B cell (primary cell): ENCODE measurements at regions of chr3 and their contacts with region 1.

Region 1: GRCh38 chr3:9749645-9750555 is at the start of gene OGG1:
- DNase-seq: peak; percentile 98
- ATAC-seq: peak; percentile 90
- H3K4me3 ChIP-seq: peak within 1 kb of the TSS; percentile 53 to 87 (median 80)
- H3K4me3 Mint-ChIP-seq: peak within 1 kb of the TSS; percentile 92
- H3K27ac ChIP-seq: peak within 1 kb of the TSS; percentile 58 to 64
- H3K27ac Mint-ChIP-seq: peak within 1 kb of the TSS; percentile 94
- H3K4me1 ChIP-seq: peaks cover 31 to 36% of the 10 kb centered on the region in 2 donors
- H3K4me1 Mint-ChIP-seq: peaks cover 49% of the 10 kb centered on the region
- H3K27me3 ChIP-seq: no peaks in the 10 kb centered on the region
- H3K27me3 Mint-ChIP-seq: no peaks in the 10 kb centered on the region
- CTCF ChIP-seq: no peak
- total RNA-seq, gene OGG1: 81.6 and 90.8 TPM in 2 replicates

Region 2: DNA sequence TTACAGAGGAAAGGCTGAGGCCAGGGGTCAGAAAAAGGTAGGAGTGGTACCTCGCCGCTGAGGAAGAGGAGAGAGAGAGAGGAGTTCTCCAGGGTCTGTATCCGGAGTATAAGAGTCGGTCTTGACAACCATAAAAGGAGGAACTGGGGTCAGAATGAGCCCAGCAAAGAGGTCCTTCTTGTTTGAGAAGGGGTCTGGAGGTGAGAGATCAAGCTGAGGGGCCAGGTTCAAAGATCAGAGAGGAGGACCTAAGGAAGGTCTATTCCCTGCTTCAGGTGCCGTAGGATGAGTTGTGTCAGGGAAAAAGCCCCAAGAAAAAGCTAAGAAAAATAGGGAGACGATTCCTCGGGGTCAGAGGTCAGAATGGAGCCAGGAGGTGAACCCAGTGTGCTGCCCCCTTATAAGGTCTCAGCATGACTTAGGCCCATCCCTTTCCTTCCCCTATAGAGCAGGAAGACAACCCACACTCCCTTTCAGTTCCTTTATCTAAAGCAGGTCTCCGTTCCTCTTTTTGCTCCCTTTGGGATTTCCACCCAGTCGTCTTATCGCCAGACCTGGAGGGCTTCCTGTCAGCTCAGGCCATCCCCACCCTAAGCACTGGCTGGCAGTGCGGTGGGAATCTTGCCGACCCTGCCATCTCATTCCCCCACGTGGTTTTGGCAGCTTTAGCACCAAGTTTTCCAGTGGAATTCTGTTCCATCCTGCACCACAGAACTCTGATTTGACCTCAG is 99.9 kb before region 1 on chr3:
- CTCF ChIA-PET with region 1: no interaction called
- POLR2A ChIA-PET with region 1: interaction called, 4 read pairs
- intact Hi-C with region 1: loop called (anchors 1 kb)
- DNase-seq: peak; percentile 81
- ATAC-seq: peak; percentile 44
- H3K4me3 ChIP-seq: peak overlapping the region; percentile 85 to 99 (median 99)
- H3K4me3 Mint-ChIP-seq: peak overlapping the region; percentile 95
- H3K27ac ChIP-seq: peak overlapping the region; percentile 92 to 95
- H3K27ac Mint-ChIP-seq: peak overlapping the region; percentile 97
- H3K4me1 ChIP-seq: peaks cover 43 to 59% of the 10 kb centered on the region in 2 donors
- H3K4me1 Mint-ChIP-seq: peaks cover 48% of the 10 kb centered on the region
- H3K27me3 ChIP-seq: no peaks in the 10 kb centered on the region
- H3K27me3 Mint-ChIP-seq: no peaks in the 10 kb centered on the region
- CTCF ChIP-seq: no peak

Region 3: GRCh38 chr3:9690451-9691450 is 59.1 kb before region 1 on chr3:
- CTCF ChIA-PET with region 1: no interaction called
- POLR2A ChIA-PET with region 1: interaction called, 10 read pairs
- intact Hi-C with region 1: no loop called
- DNase-seq: peak; percentile 66
- ATAC-seq: peak; percentile 97
- H3K4me3 ChIP-seq: no peak overlapping the region
- H3K4me3 Mint-ChIP-seq: no peak overlapping the region
- H3K27ac ChIP-seq: no peak overlapping the region
- H3K27ac Mint-ChIP-seq: no peak overlapping the region
- H3K4me1 ChIP-seq: peaks cover 17 to 27% of the 10 kb centered on the region in 2 donors
- H3K4me1 Mint-ChIP-seq: peaks cover 25% of the 10 kb centered on the region
- H3K27me3 ChIP-seq: no peaks in the 10 kb centered on the region
- H3K27me3 Mint-ChIP-seq: no peaks in the 10 kb centered on the region
- CTCF ChIP-seq: no peak

Region 4: DNA sequence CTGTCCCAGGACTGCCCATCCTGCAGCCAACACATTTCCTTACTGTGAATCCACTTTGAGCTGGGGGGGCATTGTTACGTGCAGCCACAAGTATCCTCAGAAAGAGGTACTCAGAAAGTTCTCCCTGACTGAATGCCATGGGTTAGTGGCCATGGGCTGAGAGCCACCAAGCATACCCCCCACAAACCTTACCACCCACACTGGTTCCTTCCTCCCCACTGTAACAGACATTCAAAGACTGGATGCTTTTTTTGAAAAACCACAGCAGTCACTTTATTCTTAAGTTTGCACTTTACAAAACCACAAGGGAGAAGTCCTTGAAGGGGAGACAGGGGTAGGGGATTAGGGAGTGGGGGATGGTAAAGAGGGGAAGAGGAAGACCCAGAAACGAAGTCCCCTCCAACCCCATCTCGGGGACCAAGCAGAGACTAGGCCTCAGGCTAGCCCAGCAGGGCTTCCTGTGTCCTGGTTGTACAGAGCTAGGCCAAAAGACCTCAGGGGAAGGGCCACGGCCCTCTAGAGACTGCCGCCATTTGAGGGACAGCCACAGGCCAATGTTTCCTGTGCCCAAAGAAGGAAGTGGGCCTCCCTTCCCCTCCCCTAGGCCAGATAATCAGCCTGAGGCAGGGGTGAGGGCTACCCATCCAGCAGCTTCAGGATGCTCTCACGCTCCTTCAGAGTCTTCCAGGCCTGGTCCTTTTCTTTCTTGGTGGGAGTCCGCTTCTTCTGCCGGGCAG is 30.0 kb after region 1 on chr3:
- CTCF ChIA-PET with region 1: interaction called, 25 read pairs
- POLR2A ChIA-PET with region 1: interaction called, 18 read pairs
- intact Hi-C with region 1: loop called (anchors 1 kb)
- DNase-seq: peak; percentile 73
- ATAC-seq: peak; percentile 74
- H3K4me3 ChIP-seq: peak overlapping the region in 3 of 5 experiments; percentile 1 to 18 (median 3)
- H3K4me3 Mint-ChIP-seq: peak overlapping the region; percentile 40
- H3K27ac ChIP-seq: peak overlapping the region; percentile 56 to 82
- H3K27ac Mint-ChIP-seq: peak overlapping the region; percentile 78
- H3K4me1 ChIP-seq: peaks cover 51 to 59% of the 10 kb centered on the region in 2 donors
- H3K4me1 Mint-ChIP-seq: peaks cover 59% of the 10 kb centered on the region
- H3K27me3 ChIP-seq: no peaks in the 10 kb centered on the region
- H3K27me3 Mint-ChIP-seq: no peaks in the 10 kb centered on the region
- CTCF ChIP-seq: no peak

Region 5: GRCh38 chr3:9843715-9844438 is 94.0 kb after region 1 on chr3 and contains the start of gene RPUSD3:
- CTCF ChIA-PET with region 1: no interaction called
- POLR2A ChIA-PET with region 1: no interaction called
- intact Hi-C with region 1: loop called (anchors 1 kb)
- DNase-seq: peak; percentile 97
- ATAC-seq: peak; percentile 100
- H3K4me3 ChIP-seq: peak within 1 kb of the TSS; percentile 60 to 96 (median 73)
- H3K4me3 Mint-ChIP-seq: peak within 1 kb of the TSS; percentile 98
- H3K27ac ChIP-seq: peak within 1 kb of the TSS; percentile 17 to 75
- H3K27ac Mint-ChIP-seq: peak within 1 kb of the TSS; percentile 92
- H3K4me1 ChIP-seq: peaks cover 8 to 17% of the 10 kb centered on the region in 2 donors
- H3K4me1 Mint-ChIP-seq: peaks cover 20% of the 10 kb centered on the region
- H3K27me3 ChIP-seq: no peaks in the 10 kb centered on the region
- H3K27me3 Mint-ChIP-seq: no peaks in the 10 kb centered on the region
- CTCF ChIP-seq: no peak
- total RNA-seq, gene RPUSD3: 60.7 and 62.1 TPM in 2 replicates

Region 6: DNA sequence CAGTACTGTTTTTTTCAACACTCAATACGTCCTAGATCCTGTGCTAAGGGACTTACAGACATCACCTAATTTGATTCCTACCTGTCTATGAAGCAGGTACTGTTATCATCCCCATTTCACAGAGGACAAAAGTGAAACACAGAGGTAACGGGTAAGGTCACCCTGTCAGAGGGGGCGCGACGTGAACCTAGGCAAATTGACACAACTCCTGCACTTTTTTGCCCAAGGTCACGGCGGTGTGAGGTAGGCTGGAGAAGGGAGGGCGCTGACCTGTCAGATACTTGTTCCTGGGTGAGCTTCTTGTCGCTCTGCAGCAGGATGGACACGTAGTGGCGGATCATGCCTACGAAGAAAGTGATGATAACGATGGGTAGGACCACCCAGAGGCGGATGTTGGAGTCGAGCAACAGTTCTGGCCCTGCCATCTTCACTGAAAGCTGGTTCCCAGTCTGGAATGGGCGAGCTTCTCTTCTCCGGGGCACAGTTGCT is 236.4 kb after region 1 on chr3:
- CTCF ChIA-PET with region 1: no interaction called
- POLR2A ChIA-PET with region 1: no interaction called
- intact Hi-C with region 1: loop called (anchors 10 kb)
- DNase-seq: no peak
- ATAC-seq: peak; percentile 28
- H3K4me3 ChIP-seq: peak overlapping the region; percentile 71 to 96 (median 82)
- H3K4me3 Mint-ChIP-seq: peak overlapping the region; percentile 98
- H3K27ac ChIP-seq: peak overlapping the region; percentile 88 to 97
- H3K27ac Mint-ChIP-seq: peak overlapping the region; percentile 100
- H3K4me1 ChIP-seq: peaks cover 16 to 22% of the 10 kb centered on the region in 2 donors
- H3K4me1 Mint-ChIP-seq: peaks cover 28% of the 10 kb centered on the region
- H3K27me3 ChIP-seq: no peaks in the 10 kb centered on the region
- H3K27me3 Mint-ChIP-seq: no peaks in the 10 kb centered on the region
- CTCF ChIP-seq: no peak